ENCODE measurements at regions of chr9 and their contacts with region 1.

Region 1: GRCh38 chr9:37913480-37914153 is 9.7 kb upstream of the SLC25A51 start:
- DNase-seq: peak; percentile 65
- H3K4me3 Mint-ChIP-seq: no peak overlapping the region
- H3K27ac Mint-ChIP-seq: no peak overlapping the region
- H3K4me1 Mint-ChIP-seq: peaks cover 10% of the 10 kb centered on the region
- H3K27me3 Mint-ChIP-seq: no peaks in the 10 kb centered on the region

Region 2: DNA sequence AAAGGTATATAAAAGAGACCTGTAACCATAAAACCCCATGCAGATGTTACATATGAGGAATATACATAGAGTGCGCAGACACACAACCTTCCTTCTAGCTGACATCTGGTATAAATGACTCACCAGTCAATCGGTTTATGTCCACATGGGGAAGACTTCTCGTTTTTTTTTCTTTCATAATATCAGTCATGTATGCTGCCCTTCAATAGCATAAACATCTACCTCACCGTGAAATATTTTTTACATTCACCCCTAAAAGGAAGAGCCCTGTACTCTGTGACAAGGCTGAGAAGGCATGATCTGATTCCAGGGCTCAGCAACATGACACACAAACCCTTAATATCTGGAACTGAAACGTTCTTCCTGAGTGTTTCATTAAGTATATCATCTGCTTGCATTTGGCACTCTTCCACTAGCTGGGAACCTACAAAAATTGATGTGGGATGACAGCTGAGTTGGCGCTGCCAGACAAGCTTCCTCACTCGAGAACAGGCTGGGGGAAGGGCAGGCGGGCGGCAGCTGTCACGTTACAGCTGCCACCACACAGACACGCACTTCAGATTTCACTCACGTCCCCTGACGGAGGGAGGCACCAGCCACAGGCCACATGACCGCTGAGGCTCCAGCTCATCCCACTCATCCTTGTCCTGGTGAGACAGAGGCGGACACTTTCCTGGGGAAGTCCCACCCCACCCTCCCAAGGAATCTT is 81.2 kb after region 1 on chr9:
- intact Hi-C with region 1: loop called (anchors 10 kb)
- DNase-seq: no peak
- H3K4me3 Mint-ChIP-seq: peak overlapping the region; percentile 16
- H3K27ac Mint-ChIP-seq: peak overlapping the region; percentile 26
- H3K4me1 Mint-ChIP-seq: peaks cover 23% of the 10 kb centered on the region
- H3K27me3 Mint-ChIP-seq: no peaks in the 10 kb centered on the region

Region 3: GRCh38 chr9:38160613-38161215 is 247.1 kb after region 1 on chr9:
- intact Hi-C with region 1: loop called (anchors 1 kb)
- DNase-seq: peak; percentile 30
- H3K4me3 Mint-ChIP-seq: no peak overlapping the region
- H3K27ac Mint-ChIP-seq: no peak overlapping the region
- H3K4me1 Mint-ChIP-seq: no peaks in the 10 kb centered on the region
- H3K27me3 Mint-ChIP-seq: no peaks in the 10 kb centered on the region

Region 4: DNA sequence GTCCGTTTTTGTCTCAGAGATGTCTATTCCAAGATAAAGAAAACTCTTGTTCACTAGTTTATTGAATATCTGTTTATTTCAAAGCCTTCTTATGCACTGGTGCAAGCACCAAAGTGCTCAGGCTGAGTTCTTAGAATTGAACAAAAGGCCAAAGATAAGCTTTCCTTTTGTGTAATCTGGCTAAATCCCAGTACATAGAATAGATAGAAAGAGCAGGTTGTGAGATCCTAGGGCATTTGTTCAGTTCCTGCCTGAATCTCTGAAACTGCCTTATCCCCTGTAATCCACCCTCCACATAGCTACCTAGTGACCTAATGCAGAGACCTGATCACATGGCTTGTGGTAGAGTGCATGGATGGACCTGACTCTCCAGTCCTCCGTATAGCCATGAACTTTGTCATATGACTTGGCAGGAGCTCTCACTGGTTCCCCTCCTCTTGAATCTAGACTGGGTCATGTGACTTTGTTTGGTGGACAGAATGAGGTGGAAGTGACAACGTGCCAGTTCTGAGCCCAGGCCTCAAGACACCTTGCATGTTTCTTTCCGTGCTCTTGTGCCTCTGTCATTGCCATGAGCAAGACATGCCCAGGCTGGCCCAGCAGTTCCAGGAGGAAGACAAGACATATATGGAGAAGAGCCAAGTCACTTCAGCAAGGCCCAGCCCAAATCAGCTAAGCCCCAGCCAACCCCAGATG is 294.7 kb after region 1 on chr9:
- intact Hi-C with region 1: no loop called
- DNase-seq: no peak
- H3K4me3 Mint-ChIP-seq: no peak overlapping the region
- H3K27ac Mint-ChIP-seq: no peak overlapping the region
- H3K4me1 Mint-ChIP-seq: no peaks in the 10 kb centered on the region
- H3K27me3 Mint-ChIP-seq: peaks cover under 1% of the 10 kb centered on the region

Region 5: GRCh38 chr9:38401994-38402393 is 488.4 kb after region 1 on chr9:
- intact Hi-C with region 1: loop called (anchors 2 kb)
- DNase-seq: no peak
- H3K4me3 Mint-ChIP-seq: no peak overlapping the region
- H3K27ac Mint-ChIP-seq: no peak overlapping the region
- H3K4me1 Mint-ChIP-seq: no peaks in the 10 kb centered on the region
- H3K27me3 Mint-ChIP-seq: peaks cover 4% of the 10 kb centered on the region

Measured in activated T-helper 1 cell treated with anti-CD3 and anti-CD28 coated beads, Interleukin-12 subunit alpha, Interleukin-12 subunit beta, Interleukin-2, Interleukin-4 antibody, amounts not matched to agents 30 ng/mL and 10 ng/mL and 1 ng/mL, durations not matched to agents 14 hours and 24 hours and 36 hours (primary cell).